Mammary epithelial cell (primary cell): ENCODE measurements at regions of chr18 and their contacts with region 1.

Region 1: DNA sequence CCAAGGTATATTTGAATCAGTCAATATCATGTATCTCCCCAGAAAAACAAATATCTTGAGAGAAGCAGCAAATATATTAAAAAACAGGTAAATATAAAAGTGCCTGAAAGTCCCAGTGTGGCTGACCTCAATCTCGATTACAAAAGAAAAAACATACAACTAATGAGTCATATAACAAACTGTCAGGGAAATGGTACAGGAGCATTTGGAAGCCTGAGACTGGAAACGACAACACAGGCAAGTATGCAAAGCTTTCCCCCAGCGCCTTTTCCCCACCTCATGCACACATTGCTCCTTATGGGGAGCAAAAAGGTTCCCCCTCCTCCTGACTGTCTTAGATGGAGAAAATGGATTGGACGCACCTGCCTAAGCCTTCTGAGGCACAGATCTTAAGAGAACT is 230.7 kb downstream of the TMX3 start:
- DNase-seq: peak; percentile 37
- H3K4me3 ChIP-seq: no peak overlapping the region
- H3K27ac ChIP-seq: no peak overlapping the region
- H3K4me1 ChIP-seq: no peaks in the 10 kb centered on the region
- H3K27me3 ChIP-seq: no peaks in the 10 kb centered on the region
- CTCF ChIP-seq: no peak

Region 2: GRCh38 chr18:68439642-68440041 is 44.6 kb before region 1 on chr18:
- CTCF ChIA-PET with region 1: no interaction called
- dilution Hi-C with region 1: loop called (anchors 5 kb)
- in situ Hi-C with region 1: no loop called
- intact Hi-C with region 1: no loop called
- DNase-seq: no peak
- H3K4me3 ChIP-seq: no peak overlapping the region
- H3K27ac ChIP-seq: no peak overlapping the region
- H3K4me1 ChIP-seq: peaks cover 16% of the 10 kb centered on the region
- H3K27me3 ChIP-seq: no peaks in the 10 kb centered on the region
- CTCF ChIP-seq: no peak